ENCODE measurements at regions of chr2 and their contacts with region 1.

Region 1: DNA sequence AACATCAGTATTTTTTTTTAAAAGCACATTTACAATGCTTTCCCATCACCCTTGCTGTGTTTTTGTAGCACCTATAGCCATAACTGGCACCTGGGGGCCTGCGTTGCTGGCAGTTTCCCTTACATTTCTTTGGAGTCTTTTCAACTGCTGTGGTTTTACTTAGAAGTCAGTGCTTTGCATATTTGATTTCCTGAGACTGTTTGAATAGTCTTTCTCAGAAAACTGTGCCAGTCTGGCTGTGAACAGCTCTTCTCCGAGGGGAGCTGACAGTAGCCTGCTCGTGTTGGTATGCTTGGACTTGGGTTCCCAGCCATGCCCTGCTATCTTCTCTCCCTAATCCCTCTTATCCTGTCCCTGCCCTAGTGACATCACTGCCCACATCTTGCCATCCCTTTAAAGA is 81.5 kb downstream of the DPP4 start:
- DNase-seq: peak; percentile 77
- H3K4me3 Mint-ChIP-seq: peak overlapping the region; percentile 86
- H3K27ac Mint-ChIP-seq: peak overlapping the region; percentile 100
- H3K4me1 Mint-ChIP-seq: peaks cover 69% of the 10 kb centered on the region
- H3K27me3 Mint-ChIP-seq: no peaks in the 10 kb centered on the region

Region 2: GRCh38 chr2:161662373-161662772 is 330.2 kb before region 1 on chr2:
- CTCF ChIA-PET with region 1: no interaction called
- POLR2A ChIA-PET with region 1: no interaction called
- DNase-seq: no peak
- H3K4me3 Mint-ChIP-seq: no peak overlapping the region
- H3K27ac Mint-ChIP-seq: no peak overlapping the region
- H3K4me1 Mint-ChIP-seq: no peaks in the 10 kb centered on the region
- H3K27me3 Mint-ChIP-seq: no peaks in the 10 kb centered on the region

Region 3: DNA sequence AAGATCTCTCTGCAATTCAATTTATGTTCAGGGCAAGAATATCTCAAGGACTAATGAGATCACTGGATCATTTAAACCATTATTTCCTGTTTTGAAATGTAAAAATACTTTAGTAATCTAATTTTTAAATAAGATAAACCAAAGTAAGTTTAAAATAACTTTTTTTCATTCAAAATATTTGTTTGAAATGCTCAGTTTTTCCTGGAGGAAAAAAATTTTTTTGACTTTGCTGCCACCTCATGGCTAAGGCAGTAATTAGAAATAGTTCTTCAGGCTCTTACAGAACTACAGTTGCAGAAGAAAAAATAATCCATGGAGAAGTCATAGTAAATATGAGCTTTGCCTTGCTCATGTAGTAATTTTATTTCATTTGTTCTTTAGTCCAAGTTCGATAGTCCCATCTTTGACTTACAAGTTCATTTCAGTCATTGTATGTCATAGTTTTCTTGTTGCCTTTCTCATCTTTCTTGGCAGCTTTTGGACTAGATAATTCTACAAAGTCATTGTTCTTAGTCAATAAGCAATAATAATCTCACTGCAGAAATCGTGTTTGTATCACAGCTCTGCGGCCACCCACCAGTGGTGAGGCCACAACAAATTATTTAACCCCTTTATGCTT is 45.9 kb before region 1 on chr2:
- CTCF ChIA-PET with region 1: interaction called, 16 read pairs
- POLR2A ChIA-PET with region 1: interaction called, 9 read pairs
- DNase-seq: no peak
- H3K4me3 Mint-ChIP-seq: no peak overlapping the region
- H3K27ac Mint-ChIP-seq: no peak overlapping the region
- H3K4me1 Mint-ChIP-seq: peaks cover 34% of the 10 kb centered on the region
- H3K27me3 Mint-ChIP-seq: peaks cover 2% of the 10 kb centered on the region

Region 4: GRCh38 chr2:161954103-161954502 is 38.4 kb before region 1 on chr2:
- CTCF ChIA-PET with region 1: interaction called, 22 read pairs
- POLR2A ChIA-PET with region 1: interaction called, 242 read pairs
- DNase-seq: peak; percentile 27
- H3K4me3 Mint-ChIP-seq: no peak overlapping the region
- H3K27ac Mint-ChIP-seq: peak overlapping the region; percentile 89
- H3K4me1 Mint-ChIP-seq: peaks cover 70% of the 10 kb centered on the region
- H3K27me3 Mint-ChIP-seq: no peaks in the 10 kb centered on the region

Region 5: DNA sequence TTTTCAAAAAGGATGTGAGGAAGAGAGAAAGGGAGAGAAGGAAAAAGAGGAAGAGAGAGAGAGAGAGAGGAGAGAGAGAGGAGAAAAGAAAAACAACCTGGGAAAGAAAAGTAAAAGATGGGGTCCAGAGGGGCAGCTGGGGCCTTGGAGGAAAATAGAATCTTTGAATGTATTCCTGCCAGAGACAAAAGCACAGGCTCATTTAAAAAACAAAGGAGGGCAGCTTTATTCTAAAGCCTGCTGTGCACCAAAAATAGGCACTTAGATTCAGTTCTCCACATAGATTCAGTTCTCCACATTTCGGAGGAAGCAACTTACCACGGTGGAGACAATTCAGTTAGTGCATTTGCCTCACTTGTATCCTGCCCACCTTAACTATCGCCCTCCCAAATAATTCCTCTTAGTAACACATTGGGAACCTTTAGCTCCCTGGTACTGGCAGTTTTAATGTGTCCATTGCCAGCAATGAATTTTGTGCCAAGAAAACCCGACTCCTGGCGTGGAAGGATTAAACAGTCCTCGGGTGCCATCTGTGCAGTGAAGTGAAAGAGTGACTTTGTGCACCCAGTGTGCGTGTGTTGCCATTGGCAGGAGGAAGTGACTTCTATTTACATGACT is 10.2 kb after region 1 on chr2:
- CTCF ChIA-PET with region 1: interaction called, 10 read pairs
- POLR2A ChIA-PET with region 1: interaction called, 41 read pairs
- DNase-seq: no peak
- H3K4me3 Mint-ChIP-seq: no peak overlapping the region
- H3K27ac Mint-ChIP-seq: peak overlapping the region; percentile 38
- H3K4me1 Mint-ChIP-seq: peaks cover 49% of the 10 kb centered on the region
- H3K27me3 Mint-ChIP-seq: no peaks in the 10 kb centered on the region

Region 6: GRCh38 chr2:162013514-162014475 is 21.3 kb after region 1 on chr2:
- CTCF ChIA-PET with region 1: interaction called, 8 read pairs
- POLR2A ChIA-PET with region 1: interaction called, 113 read pairs
- DNase-seq: no peak
- H3K4me3 Mint-ChIP-seq: peak overlapping the region; percentile 50
- H3K27ac Mint-ChIP-seq: peak overlapping the region; percentile 91
- H3K4me1 Mint-ChIP-seq: peaks cover 74% of the 10 kb centered on the region
- H3K27me3 Mint-ChIP-seq: no peaks in the 10 kb centered on the region

Region 7: DNA sequence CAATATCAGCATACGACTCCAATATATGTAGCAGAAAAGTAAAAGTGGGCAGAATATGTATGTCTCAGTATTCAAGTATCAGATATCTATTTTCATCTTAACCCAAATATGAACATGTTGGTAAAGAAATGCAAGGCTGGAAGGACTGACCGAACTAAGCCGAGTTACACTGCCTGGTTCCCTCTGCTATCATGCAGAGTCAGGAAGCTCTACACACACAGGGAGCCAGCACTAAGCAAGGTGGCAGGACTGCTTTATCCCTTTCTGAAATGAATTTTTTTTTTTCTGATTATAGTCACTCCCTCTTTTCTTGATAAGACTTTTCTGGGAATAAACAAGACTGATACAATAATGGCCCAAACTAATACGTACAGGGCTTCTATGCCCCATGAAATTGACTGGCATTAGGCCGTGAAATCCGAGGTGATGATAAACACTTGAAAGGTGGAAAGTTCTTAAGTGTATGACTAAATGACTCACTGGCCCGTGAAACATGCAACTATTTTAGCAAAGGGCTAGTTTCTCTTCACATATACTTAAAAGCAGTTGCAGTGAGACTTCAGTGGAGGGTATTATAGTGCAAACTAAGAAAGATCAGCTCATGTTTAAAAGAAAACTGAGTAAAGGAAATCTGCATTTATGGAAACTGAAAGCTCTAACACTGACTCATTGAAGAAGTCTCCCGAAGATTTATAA is 66.6 kb after region 1 on chr2:
- CTCF ChIA-PET with region 1: interaction called, 5 read pairs
- POLR2A ChIA-PET with region 1: interaction called, 64 read pairs
- DNase-seq: peak; percentile 29
- H3K4me3 Mint-ChIP-seq: peak overlapping the region; percentile 72
- H3K27ac Mint-ChIP-seq: peak overlapping the region; percentile 94
- H3K4me1 Mint-ChIP-seq: peaks cover 89% of the 10 kb centered on the region
- H3K27me3 Mint-ChIP-seq: no peaks in the 10 kb centered on the region